Psoas muscle (tissue), 8 donors: ENCODE measurements at regions of chr2 and their contacts with region 1.

Region 1: GRCh38 chr2:97926946-97927345 is 68.8 kb downstream of the TMEM131 start:
- DNase-seq: no peak
- ATAC-seq: no peak
- H3K4me3 ChIP-seq: no peak overlapping the region
- H3K27ac ChIP-seq: no peak overlapping the region
- H3K4me1 ChIP-seq: peaks cover 27% of the 10 kb centered on the region
- H3K27me3 ChIP-seq: no peaks in the 10 kb centered on the region
- CTCF ChIP-seq: no peak

Region 2: GRCh38 chr2:97834610-97835009 is 92.3 kb before region 1 on chr2:
- intact Hi-C with region 1: no loop called
- DNase-seq: no peak
- ATAC-seq: no peak
- H3K4me3 ChIP-seq: no peak overlapping the region
- H3K27ac ChIP-seq: no peak overlapping the region
- H3K4me1 ChIP-seq: peaks cover 6% of the 10 kb centered on the region
- H3K27me3 ChIP-seq: no peaks in the 10 kb centered on the region
- CTCF ChIP-seq: no peak

Region 3: DNA sequence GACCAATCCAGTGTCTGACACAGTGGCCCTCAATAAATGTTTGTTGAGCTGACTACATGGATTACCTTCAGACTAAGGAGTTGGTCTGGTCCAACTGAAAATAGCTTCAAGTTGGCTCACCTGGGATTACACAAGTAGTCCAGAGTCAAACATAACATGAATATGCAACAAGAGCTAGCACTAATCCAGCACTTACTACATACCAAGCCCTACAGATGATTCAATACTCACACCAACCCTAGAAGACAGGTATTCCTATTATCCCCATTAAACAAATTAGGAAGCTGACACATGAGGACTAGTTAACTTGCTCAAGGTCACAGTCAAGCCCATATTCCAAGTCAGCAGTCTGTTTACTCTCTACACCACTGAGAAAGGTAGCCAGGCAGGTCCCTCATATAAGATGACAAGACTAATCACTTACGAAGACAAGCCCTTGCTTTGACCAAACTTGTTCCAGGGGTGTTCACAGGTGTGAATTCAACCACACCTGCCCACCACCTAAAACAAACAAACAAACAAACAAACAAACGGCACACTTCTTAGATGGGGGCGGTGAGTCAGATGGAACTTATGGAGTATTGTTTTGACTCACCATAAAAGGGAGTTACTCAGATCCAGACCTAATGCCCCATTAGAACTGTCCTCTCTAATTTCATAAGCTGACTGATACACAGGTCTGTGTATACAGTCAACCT is 39.7 kb after region 1 on chr2:
- intact Hi-C with region 1: loop called in 1 of 2 experiments (anchors 5 kb)
- DNase-seq: no peak
- ATAC-seq: peak; percentile 60 to 84 (median 67)
- H3K4me3 ChIP-seq: no peak overlapping the region
- H3K27ac ChIP-seq: peak overlapping the region; percentile 55
- H3K4me1 ChIP-seq: peaks cover 63% of the 10 kb centered on the region
- H3K27me3 ChIP-seq: no peaks in the 10 kb centered on the region
- CTCF ChIP-seq: no peak